Dorsolateral prefrontal cortex (tissue), 120 donors: ENCODE measurements at regions of chr5 and their contacts with region 1.

Region 1: GRCh38 chr5:892394-893136 is at the starts of genes BRD9 and TRIP13:
- DNase-seq: peak; percentile 40 to 94 (median 80)
- H3K4me3 ChIP-seq: peak within 1 kb of the TSS; percentile 68 to 98 (median 89)
- H3K27ac ChIP-seq: peak within 1 kb of the TSS in 54 of 59 donors; percentile 25 to 88 (median 80)
- H3K27me3 ChIP-seq: no peaks in the 10 kb centered on the region
- CTCF ChIP-seq: peak in 27 of 56 donors; percentile 12 to 67 (median 42)
- total RNA-seq, gene BRD9: 53.0 to 164 (median 82.5) TPM
- total RNA-seq, gene TRIP13: 0.40 to 4.4 (median 1.5) TPM

Region 2: GRCh38 chr5:442335-443238 is 450.0 kb before region 1 on chr5 and contains the start of gene EXOC3:
- intact Hi-C with region 1: loop called (anchors 5 to 10 kb)
- DNase-seq: peak in 9 of 10 donors; percentile 42 to 92 (median 63)
- H3K4me3 ChIP-seq: peak within 1 kb of the TSS; percentile 69 to 100 (median 95)
- H3K27ac ChIP-seq: peak within 1 kb of the TSS in 58 of 59 donors; percentile 29 to 94 (median 78)
- H3K27me3 ChIP-seq: peaks cover 0 to under 1% (median 0%) of the 10 kb centered on the region in 45 donors
- CTCF ChIP-seq: peak in 17 of 56 donors; percentile 6 to 38 (median 23)
- total RNA-seq, gene EXOC3: 50.6 to 107 (median 77.8) TPM

Region 3: GRCh38 chr5:611721-612486 is 280.7 kb before region 1 on chr5 and contains the start of gene CEP72:
- intact Hi-C with region 1: loop called in 1 of 2 experiments (anchors 5 kb)
- DNase-seq: peak; percentile 84 to 96 (median 88)
- H3K4me3 ChIP-seq: peak within 1 kb of the TSS; percentile 65 to 98 (median 88)
- H3K27ac ChIP-seq: peak within 1 kb of the TSS in 5 of 59 donors; percentile 36 to 79 (median 59)
- H3K27me3 ChIP-seq: peaks cover 0 to 2% (median 0%) of the 10 kb centered on the region in 45 donors
- CTCF ChIP-seq: peak in 2 of 56 donors; percentile 12 to 33
- total RNA-seq, gene CEP72: 4.0 to 11.0 (median 7.0) TPM

Region 4: DNA sequence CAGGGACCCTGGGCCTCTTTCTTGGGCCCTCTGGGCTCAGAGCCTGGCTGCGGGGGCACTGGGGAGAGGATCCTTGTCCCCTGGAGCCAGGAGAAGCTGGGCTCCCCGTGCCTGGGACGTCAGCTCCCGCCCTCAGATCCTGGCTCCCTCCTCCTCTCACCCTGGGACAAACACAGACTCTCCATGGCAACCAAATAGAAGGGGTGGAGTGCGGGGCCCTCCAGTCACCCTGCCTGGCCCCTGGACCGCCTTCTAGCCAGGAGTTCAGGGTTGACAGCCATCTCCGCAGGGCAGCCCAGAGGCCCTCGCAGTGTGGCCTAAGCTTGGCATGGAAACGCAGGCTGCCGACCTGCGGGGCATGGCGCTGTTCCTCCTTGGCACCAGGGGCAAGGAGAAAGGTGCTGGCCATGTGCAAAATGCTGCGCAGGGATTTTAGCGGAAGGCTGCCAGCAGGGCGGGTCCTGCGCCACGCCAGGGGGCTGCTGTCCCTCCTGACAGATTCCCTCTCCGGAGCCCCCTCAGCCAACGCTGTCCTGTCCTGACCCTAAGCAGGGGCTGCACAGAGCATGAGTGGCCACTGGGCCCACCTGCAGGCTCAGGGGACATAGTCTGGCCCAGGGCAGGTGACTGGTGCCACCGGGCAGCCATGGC is 42.8 kb before region 1 on chr5:
- intact Hi-C with region 1: no loop called
- DNase-seq: peak in 4 of 10 donors; percentile 2 to 35 (median 28)
- H3K4me3 ChIP-seq: peak overlapping the region in 7 of 59 donors; percentile 4 to 44 (median 12)
- H3K27ac ChIP-seq: no peak overlapping the region
- H3K27me3 ChIP-seq: peaks cover 0 to 8% (median 0%) of the 10 kb centered on the region in 45 donors
- CTCF ChIP-seq: no peak